ENCODE measurements at regions of chr12 and their contacts with region 1.

Region 1: DNA sequence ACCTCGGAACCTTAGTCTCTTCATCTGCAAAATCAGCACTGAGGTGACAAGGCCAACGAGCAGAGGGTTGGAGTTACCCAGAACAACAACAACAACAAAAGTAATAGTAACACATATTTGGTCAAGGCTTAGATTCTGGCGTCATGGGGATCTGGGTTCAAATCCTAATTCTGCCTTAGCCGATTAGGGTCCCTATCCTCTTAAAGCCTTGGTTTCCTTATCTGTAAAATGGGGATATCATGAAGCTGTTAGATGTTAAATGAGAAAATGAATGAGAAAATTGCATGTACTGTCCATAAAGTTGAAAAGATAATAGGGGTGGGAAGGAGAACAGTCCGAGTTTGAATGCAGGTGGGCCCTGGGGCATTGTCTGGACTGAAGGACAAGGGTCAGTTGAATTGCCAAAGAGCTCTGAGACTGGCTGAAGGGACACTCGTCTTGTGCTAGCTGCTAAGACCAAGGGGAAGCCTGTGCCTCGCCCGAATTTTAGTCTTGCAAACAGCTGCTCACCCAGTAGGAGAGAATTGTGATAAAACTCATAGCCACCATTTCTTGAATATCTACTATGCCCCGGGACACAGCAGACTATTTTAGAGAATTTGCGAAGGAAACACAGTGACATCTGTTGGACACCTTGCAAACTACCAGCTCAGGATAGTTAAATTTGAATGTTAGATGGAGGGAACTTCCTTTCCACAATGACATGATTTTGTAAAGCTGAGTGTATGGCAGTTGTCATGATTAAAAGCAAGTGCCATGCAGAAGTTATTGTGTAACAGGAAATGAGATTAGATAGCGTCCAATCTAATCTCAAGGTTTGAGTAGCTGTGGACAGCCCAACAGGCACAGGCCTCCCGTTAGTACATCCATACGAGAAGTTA is 6.8 kb upstream of the HNF1A start:
- DNase-seq: peak in 2 of 10 donors; percentile 11 to 47
- H3K4me3 ChIP-seq: no peak overlapping the region
- H3K27ac ChIP-seq: no peak overlapping the region
- H3K27me3 ChIP-seq: no peaks in the 10 kb centered on the region
- CTCF ChIP-seq: peak; percentile 53 to 87 (median 78)

Region 2: GRCh38 chr12:120737557-120738251 is 233.8 kb before region 1 on chr12:
- intact Hi-C with region 1: loop called in 1 of 2 experiments (anchors 10 kb)
- DNase-seq: no peak
- H3K4me3 ChIP-seq: no peak overlapping the region
- H3K27ac ChIP-seq: no peak overlapping the region
- H3K27me3 ChIP-seq: no peaks in the 10 kb centered on the region
- CTCF ChIP-seq: peak in 14 of 56 donors; percentile 6 to 36 (median 18)

Region 3: DNA sequence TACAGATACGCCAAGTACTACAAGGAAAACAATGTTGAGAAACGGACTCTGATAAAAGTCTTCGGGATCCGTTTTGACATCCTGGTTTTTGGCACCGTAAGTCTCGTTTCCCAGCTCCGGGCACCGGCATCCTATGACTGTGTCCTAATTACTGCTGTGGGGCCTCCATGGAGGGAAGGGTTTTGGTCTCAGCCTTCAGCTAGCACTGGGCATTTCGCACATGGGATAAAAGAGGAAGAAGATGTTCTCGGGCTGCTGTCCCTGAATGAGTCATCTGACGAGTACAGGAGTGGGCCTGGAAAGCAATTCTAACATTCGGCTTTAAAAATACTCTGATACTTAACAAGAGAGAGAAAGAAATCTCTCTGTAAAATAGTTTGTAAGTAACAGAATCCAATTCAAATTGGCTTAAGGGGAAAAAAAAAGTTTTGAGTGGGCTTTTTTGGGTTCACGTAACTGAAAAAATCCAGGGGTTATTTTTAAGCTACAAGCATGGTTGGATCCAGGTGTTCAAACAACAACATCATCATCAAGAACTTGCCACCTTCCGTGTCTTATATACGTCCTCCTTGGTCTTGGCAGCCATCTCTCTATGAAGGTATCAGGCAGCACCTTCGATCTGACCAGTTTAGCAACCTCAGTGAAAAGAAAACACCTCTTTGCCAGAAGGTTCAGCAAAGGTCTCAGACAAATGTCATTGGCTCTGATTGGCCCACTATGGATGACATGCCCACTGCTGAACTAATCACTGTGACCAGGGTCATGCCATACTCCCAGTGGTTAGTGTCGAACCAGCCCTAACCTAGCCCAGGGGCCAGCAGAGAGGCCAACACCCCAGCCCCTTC is 204.1 kb after region 1 on chr12:
- intact Hi-C with region 1: no loop called
- DNase-seq: peak in 8 of 10 donors; percentile 47 to 79 (median 64)
- H3K4me3 ChIP-seq: peak overlapping the region in 1 of 59 donors; percentile 4
- H3K27ac ChIP-seq: peak overlapping the region in 58 of 59 donors; percentile 54 to 96 (median 90)
- H3K27me3 ChIP-seq: no peaks in the 10 kb centered on the region
- CTCF ChIP-seq: no peak

Measured in dorsolateral prefrontal cortex (tissue), 120 donors.